Activated CD8-positive, alpha-beta memory T cell treated with anti-CD3 and anti-CD28 coated beads, Interleukin-2, amount 10 ng/mL, durations not matched to agents 7 days and 5 days (primary cell): ENCODE measurements at regions of chr1 and their contacts with region 1.

Region 1: GRCh38 chr1:202192770-202193613 is 607 bp upstream of the LGR6 start:
- DNase-seq: peak; percentile 69
- ATAC-seq: peak; percentile 54
- H3K4me3 Mint-ChIP-seq: no peak overlapping the region
- H3K27ac Mint-ChIP-seq: no peak overlapping the region
- H3K4me1 Mint-ChIP-seq: peaks cover 3% of the 10 kb centered on the region
- H3K27me3 Mint-ChIP-seq: peaks cover 33% of the 10 kb centered on the region

Region 2: DNA sequence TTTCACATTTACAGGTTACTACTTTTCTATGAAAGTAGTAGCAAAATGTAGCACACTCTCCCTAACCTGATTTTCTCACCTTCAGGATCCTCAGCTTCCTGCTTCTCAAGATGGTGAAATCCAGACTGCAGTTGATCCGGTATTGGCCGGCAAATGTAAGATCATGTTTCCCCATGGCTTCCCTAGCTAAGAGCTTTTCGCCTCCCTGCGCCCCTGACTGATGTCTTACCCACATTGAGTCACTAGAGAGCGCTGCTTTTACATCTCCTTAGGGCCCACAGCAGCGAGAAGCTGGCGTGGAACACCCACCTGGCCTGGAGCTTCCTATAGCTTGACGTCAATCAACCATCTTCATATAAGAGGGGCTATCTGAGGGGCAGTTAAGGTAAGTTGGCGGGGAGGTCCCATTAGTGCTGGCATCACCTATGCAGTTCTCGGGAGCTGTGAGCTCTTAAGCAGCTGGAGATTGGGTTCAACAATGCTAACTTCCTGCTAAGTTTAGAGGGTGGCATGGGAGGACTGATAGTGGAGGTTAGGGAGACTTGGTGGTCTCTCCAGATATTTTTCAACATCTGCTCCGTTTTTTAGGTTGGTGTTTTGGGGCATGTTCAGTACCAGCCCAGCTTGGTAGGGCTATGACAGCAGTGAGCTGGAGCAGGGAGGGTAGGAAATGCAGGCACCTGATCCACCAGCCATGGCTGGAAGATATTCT is 38.1 kb before region 1 on chr1:
- CTCF ChIA-PET with region 1: interaction called, 28 read pairs
- DNase-seq: peak; percentile 74
- ATAC-seq: peak; percentile 49
- H3K4me3 Mint-ChIP-seq: no peak overlapping the region
- H3K27ac Mint-ChIP-seq: peak overlapping the region; percentile 8
- H3K4me1 Mint-ChIP-seq: peaks cover 62% of the 10 kb centered on the region
- H3K27me3 Mint-ChIP-seq: no peaks in the 10 kb centered on the region

Region 3: DNA sequence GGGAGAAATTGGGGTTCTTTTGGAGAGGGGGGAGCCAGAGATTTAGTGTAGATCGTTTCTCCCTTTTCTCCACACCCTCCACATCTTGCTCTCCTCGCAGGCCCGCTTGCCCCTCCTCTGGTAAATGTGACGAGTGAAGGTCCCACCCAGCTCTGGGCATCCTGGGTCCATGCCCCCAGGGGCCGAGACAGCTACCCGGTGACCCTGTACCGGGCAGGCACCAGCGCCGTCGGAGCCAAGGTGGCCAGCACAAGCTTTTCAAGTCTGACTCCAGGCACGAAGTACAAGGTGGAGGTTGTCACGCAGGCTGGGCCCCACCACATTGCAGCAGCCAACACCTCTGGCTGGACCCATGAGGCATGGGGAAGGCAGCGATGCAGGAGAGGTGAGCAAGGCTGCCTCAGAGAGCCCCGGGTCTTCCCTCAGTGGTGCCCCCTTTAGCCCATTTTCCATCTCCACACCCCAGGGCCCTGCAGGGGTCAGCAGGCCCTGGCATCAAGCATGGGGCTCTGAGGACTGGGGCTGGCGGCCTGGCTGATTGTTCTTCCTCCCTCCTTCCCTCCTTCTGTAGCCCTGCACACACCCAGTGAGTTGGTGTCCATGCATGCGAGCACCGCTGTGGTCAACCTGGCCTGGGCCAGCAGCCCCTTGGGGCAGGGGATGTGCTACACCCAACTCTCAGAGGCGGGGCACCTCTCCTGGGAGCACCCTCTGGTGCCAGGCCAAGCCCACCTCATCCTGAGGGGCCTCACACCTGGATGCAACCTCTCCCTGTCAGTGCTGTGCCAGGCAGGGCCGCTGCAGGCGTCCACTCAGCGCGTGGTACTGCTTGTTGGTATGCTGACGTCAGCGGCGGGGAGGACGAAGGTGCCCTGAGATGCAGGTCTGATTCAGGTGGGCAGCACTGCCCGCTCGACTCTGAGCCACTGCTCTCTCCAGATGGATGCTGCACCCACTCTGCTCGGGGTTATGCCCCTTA is 15.8 kb before region 1 on chr1:
- CTCF ChIA-PET with region 1: interaction called, 21 read pairs
- DNase-seq: no peak
- ATAC-seq: no peak
- H3K4me3 Mint-ChIP-seq: no peak overlapping the region
- H3K27ac Mint-ChIP-seq: no peak overlapping the region
- H3K4me1 Mint-ChIP-seq: peaks cover 3% of the 10 kb centered on the region
- H3K27me3 Mint-ChIP-seq: no peaks in the 10 kb centered on the region

Region 4: GRCh38 chr1:202227053-202227672 is 34.2 kb after region 1 on chr1:
- CTCF ChIA-PET with region 1: interaction called, 11 read pairs
- DNase-seq: peak; percentile 65
- ATAC-seq: peak; percentile 65
- H3K4me3 Mint-ChIP-seq: no peak overlapping the region
- H3K27ac Mint-ChIP-seq: no peak overlapping the region
- H3K4me1 Mint-ChIP-seq: peaks cover 18% of the 10 kb centered on the region
- H3K27me3 Mint-ChIP-seq: peaks cover 15% of the 10 kb centered on the region

Region 5: GRCh38 chr1:202306535-202307345 is 113.7 kb after region 1 on chr1:
- CTCF ChIA-PET with region 1: interaction called, 17 read pairs
- DNase-seq: no peak
- ATAC-seq: no peak
- H3K4me3 Mint-ChIP-seq: no peak overlapping the region
- H3K27ac Mint-ChIP-seq: no peak overlapping the region
- H3K4me1 Mint-ChIP-seq: peaks cover 2% of the 10 kb centered on the region
- H3K27me3 Mint-ChIP-seq: no peaks in the 10 kb centered on the region

Region 6: DNA sequence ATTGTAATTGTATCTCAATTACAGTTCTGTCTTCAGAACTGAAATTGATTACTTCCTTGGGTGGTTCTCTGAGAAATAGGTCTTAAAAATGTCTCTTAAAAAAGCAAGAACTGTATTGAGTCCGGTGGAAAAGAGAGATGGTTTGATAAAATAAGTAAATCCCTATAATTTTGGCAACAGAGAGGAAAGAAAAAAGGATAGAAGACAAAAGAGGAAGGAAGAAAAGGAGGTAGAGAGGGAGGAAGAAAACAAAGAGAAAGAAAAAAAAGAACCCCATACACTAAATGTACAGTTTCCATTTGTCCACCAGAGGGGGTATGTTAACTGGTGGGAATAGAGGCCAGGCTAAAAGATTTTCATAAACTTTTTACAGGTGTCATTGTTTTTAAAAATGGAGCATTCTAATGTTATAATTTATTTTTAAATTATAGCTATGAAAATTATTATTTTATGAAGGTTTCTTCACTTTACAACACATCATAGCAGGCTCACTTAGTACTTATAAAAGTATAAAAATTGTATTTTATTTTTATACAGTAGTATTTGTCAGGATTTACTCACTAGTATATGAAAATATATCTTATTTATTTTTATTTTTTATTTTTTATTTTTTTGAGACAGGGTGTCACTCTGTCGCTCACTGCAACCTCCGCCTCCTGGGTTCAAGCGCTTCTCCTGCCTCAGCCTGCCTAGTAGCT is 150.8 kb after region 1 on chr1:
- CTCF ChIA-PET with region 1: interaction called, 10 read pairs
- DNase-seq: no peak
- ATAC-seq: no peak
- H3K4me3 Mint-ChIP-seq: peak overlapping the region; percentile 54
- H3K27ac Mint-ChIP-seq: peak overlapping the region; percentile 94
- H3K4me1 Mint-ChIP-seq: peaks cover 41% of the 10 kb centered on the region
- H3K27me3 Mint-ChIP-seq: no peaks in the 10 kb centered on the region